Activated CD4-positive, alpha-beta T cell treated with anti-CD3 and anti-CD28 coated beads for 36 hours (primary cell): ENCODE measurements at regions of chrX and their contacts with region 1.

Region 1: DNA sequence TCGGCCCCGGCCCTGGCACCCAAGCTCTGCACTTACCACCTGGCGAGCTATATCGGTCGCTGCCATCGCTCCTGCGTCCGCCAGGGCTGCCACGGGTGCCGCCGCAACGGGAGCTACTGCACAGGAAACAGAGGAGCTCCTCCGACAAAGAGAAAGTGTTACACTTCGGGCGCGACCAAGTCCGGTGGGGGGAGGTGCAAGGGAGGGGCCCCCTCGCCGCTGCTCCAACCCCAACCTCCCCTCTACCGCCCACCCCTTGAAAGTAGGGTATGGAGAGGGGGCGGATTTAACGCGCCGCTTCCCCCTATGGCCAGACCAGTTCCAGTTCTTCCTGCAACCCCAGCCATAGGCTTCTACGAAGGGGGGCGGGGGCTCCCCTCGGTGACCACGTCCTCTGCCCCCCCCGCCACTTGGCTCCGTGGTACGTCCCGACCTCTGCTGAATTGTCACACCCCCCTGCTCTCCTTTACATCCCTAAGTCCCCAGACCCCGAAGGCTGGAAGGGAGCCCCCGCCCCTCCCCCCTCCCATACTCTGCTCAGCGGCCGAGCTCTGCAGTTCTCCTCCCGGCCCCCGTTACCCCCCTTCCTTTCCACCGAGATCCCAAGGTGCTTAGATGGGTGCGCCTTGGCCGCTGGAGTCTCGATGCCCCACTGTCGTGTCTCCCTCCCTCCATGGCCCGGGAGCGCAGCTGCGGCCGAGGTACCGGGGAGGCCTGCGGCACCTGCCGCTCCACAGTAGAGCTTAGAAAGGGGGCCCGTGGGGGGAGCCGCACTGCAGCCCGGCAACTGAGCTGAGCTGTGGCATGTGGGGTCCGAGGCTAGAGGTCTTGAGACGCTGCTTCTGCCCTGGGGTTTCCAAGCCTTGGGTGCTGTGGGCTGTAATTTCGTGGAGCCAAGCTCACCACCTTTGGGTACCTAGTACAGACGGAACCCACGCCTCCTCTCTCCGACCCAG is at the start of gene SEPTIN6:
- DNase-seq: peak; percentile 90
- ATAC-seq: peak; percentile 53
- H3K4me3 Mint-ChIP-seq: peak within 1 kb of the TSS; percentile 98
- H3K27ac Mint-ChIP-seq: peak within 1 kb of the TSS; percentile 98
- H3K4me1 Mint-ChIP-seq: peaks cover 3% of the 10 kb centered on the region
- H3K27me3 Mint-ChIP-seq: no peaks in the 10 kb centered on the region
- total RNA-seq, gene SEPTIN6: 183 to 233 TPM

Region 2: DNA sequence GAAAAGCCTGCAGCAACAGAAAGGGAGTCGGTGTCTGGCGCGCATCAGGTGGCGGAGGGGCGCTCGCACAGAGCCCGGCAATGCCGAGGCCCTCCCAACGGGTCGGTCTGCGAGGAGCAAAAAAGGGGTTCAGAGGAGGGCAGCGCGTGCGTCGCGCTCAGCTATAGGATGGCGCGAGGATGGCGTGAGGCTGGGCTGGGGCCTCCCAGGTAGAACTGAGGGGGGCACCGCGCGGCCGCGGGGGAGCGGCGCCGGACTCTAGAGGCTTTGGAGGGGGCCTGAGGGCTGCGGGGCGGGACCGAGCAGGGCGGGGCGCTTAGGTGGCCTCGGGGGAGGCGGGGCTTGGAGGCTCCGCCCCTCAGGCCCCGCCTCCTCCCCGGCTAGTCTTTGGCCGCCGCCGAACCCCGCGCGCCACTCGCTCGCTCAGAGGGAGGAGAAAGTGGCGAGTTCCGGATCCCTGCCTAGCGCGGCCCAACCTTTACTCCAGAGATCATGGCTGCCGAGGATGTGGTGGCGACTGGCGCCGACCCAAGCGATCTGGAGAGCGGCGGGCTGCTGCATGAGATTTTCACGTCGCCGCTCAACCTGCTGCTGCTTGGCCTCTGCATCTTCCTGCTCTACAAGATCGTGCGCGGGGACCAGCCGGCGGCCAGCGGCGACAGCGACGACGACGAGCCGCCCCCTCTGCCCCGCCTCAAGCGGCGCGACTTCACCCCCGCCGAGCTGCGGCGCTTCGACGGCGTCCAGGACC is 457.3 kb before region 1 on chrX and contains the start of gene PGRMC1:
- CTCF ChIA-PET with region 1: no interaction called
- POLR2A ChIA-PET with region 1: no interaction called
- intact Hi-C with region 1: loop called in 1 of 2 experiments (anchors 10 kb)
- DNase-seq: peak; percentile 86
- ATAC-seq: peak; percentile 94
- H3K4me3 Mint-ChIP-seq: peak within 1 kb of the TSS; percentile 89
- H3K27ac Mint-ChIP-seq: peak within 1 kb of the TSS; percentile 86
- H3K4me1 Mint-ChIP-seq: peaks cover 27% of the 10 kb centered on the region
- H3K27me3 Mint-ChIP-seq: peaks cover 3% of the 10 kb centered on the region
- total RNA-seq, gene PGRMC1: 30.8 to 37.3 TPM

Region 3: GRCh38 chrX:119565107-119565663 is 128.1 kb before region 1 on chrX and contains the start of gene STEEP1:
- CTCF ChIA-PET with region 1: no interaction called
- POLR2A ChIA-PET with region 1: no interaction called
- intact Hi-C with region 1: loop called (anchors 2 to 5 kb)
- DNase-seq: peak; percentile 93
- ATAC-seq: peak; percentile 99
- H3K4me3 Mint-ChIP-seq: peak within 1 kb of the TSS; percentile 89
- H3K27ac Mint-ChIP-seq: peak within 1 kb of the TSS; percentile 91
- H3K4me1 Mint-ChIP-seq: peaks cover 12% of the 10 kb centered on the region
- H3K27me3 Mint-ChIP-seq: no peaks in the 10 kb centered on the region
- total RNA-seq, gene STEEP1: 21.3 to 21.7 TPM

Region 4: GRCh38 chrX:119574394-119575266 is 118.7 kb before region 1 on chrX and contains the start of gene UBE2A:
- CTCF ChIA-PET with region 1: no interaction called
- POLR2A ChIA-PET with region 1: interaction called, 3 read pairs
- intact Hi-C with region 1: loop called (anchors 1 to 5 kb)
- DNase-seq: peak; percentile 92
- ATAC-seq: peak; percentile 92
- H3K4me3 Mint-ChIP-seq: peak within 1 kb of the TSS; percentile 94
- H3K27ac Mint-ChIP-seq: peak within 1 kb of the TSS; percentile 87
- H3K4me1 Mint-ChIP-seq: peaks cover 24% of the 10 kb centered on the region
- H3K27me3 Mint-ChIP-seq: no peaks in the 10 kb centered on the region
- total RNA-seq, gene UBE2A: 49.2 to 67.9 TPM

Region 5: DNA sequence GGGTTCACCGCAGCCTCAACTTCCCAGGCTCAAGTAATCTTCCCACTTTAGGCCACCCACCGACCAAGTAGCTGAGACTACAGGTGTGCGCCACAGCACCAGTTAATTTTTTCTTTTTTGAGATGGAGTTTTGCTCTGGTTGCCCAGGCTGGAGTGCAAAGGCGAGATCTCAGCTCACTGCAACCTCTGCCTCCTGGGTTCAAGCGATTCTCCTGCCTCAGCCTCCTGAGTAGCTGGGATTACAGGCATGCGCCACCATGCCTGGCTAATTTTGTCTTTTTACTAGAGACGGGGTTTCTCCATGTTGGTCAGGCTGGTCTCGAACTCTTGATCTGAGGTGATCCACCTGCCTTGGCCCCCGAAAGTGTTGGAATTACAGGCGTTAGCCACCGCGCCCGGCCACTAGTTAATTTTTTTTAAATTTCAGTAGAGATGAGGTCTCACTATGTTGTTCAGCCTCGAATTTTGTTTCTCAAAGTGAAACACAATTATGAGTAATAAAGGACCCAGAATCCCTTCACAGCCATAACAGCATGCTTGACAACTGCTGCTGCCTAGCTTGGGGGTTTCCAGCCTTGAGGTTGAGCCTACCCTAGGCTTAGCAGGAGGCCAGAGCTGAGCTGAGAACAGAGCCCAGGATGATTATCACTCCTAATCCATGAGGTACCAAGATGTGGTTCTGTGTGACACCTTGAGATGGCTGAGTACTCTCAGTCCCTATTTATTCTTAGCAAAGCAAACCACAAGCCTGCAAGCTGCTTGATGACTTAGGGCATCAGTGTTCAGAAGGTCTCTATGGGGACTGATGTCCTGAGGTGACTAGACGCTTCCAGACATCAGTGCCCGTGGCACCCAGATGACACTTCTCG is 45.5 kb before region 1 on chrX:
- CTCF ChIA-PET with region 1: interaction called, 4 read pairs
- POLR2A ChIA-PET with region 1: interaction called, 12 read pairs
- intact Hi-C with region 1: loop called in 1 of 2 experiments (anchors 1 kb)
- DNase-seq: peak; percentile 81
- ATAC-seq: peak; percentile 96
- H3K4me3 Mint-ChIP-seq: peak overlapping the region; percentile 32
- H3K27ac Mint-ChIP-seq: peak overlapping the region; percentile 91
- H3K4me1 Mint-ChIP-seq: peaks cover 36% of the 10 kb centered on the region
- H3K27me3 Mint-ChIP-seq: no peaks in the 10 kb centered on the region

Region 6: GRCh38 chrX:119655125-119655524 is 38.2 kb before region 1 on chrX:
- CTCF ChIA-PET with region 1: no interaction called
- POLR2A ChIA-PET with region 1: no interaction called
- intact Hi-C with region 1: loop called in 1 of 2 experiments (anchors 2 kb)
- DNase-seq: peak; percentile 83
- ATAC-seq: peak; percentile 86
- H3K4me3 Mint-ChIP-seq: peak overlapping the region; percentile 55
- H3K27ac Mint-ChIP-seq: peak overlapping the region; percentile 92
- H3K4me1 Mint-ChIP-seq: peaks cover 39% of the 10 kb centered on the region
- H3K27me3 Mint-ChIP-seq: no peaks in the 10 kb centered on the region

Region 7: DNA sequence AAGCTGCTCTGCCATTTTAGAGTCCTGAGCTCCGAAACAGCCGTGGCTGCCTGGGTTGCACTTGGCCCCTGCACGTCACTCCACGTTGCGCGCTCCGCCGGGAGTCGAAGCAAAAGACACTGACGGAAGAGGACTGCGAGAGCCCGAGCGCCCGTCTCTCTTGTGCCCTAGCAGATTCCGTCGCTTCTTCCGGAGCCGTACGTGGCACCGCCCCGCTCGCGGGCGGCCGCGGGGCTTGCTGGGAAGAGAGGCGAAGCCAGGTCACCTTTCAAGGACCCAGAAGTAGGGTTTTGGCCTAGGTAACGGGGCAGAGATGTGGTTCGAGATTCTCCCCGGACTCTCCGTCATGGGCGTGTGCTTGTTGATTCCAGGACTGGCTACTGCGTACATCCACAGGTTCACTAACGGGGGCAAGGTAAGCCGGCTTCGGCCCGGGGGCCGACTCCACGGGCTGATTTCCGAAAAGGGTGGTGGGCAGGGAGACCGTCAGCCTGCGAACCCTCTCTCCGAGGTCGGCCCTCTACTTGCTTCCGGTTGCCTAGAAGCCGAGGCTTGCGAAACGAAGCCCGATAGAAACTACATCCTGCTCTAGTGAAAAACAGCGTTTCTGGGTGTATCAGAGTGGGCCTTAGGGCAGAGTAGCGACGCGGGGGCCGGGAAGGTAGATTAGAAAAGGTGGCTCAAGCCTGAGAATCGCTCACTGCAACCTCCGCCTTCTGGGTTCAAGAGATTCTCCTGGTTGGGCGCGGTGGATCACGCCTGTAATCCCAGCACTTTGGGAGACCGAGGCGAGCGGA is 178.5 kb after region 1 on chrX and contains the starts of genes NDUFA1 and RNF113A:
- CTCF ChIA-PET with region 1: no interaction called
- POLR2A ChIA-PET with region 1: no interaction called
- intact Hi-C with region 1: loop called (anchors 2 to 5 kb)
- DNase-seq: peak; percentile 91
- ATAC-seq: peak; percentile 93
- H3K4me3 Mint-ChIP-seq: peak within 1 kb of the TSS; percentile 100
- H3K27ac Mint-ChIP-seq: peak within 1 kb of the TSS; percentile 99
- H3K4me1 Mint-ChIP-seq: peaks cover 14% of the 10 kb centered on the region
- H3K27me3 Mint-ChIP-seq: no peaks in the 10 kb centered on the region
- total RNA-seq, gene NDUFA1: 37.6 to 101 TPM
- total RNA-seq, gene RNF113A: 26.9 to 29.9 TPM